IMR-90 (cell line): ENCODE measurements at regions of chr12 and their contacts with region 1.

Region 1: DNA sequence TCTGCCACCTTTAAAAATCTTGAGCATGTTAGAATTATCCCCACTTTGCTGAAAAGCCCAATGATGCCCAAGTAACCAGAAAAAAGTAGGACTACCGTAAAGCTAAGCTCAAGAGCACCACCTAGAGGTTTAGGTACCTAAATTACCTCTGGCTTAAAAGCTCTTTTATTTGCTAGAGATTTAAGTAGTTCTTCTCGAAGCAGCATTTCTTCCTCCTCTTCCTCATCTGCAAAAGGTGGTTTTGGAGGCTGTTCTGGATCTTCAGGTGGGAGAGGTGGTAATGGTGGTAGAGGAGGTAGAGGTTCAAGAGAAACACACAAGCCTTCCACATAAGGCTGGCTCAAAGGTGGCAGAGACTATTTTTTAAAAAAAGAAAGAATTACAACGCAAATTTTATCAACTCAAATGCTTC is 26.9 kb downstream of the ZFC3H1 start:
- DNase-seq: peak; percentile 72
- ATAC-seq: peak; percentile 54; the same call in 1 of the 2 replicates
- H3K4me3 ChIP-seq: no peak overlapping the region
- H3K27ac ChIP-seq: no peak overlapping the region
- H3K4me1 ChIP-seq: no peaks in the 10 kb centered on the region
- H3K27me3 ChIP-seq: no peaks in the 10 kb centered on the region
- CTCF ChIP-seq: peak; percentile 57
- POLR2A ChIP-seq: no peak
- RAD21 ChIP-seq: peak; percentile 38

Region 2: GRCh38 chr12:71648537-71648936 is 11.8 kb after region 1 on chr12:
- CTCF ChIA-PET with region 1: interaction called, 7 read pairs
- POLR2A ChIA-PET with region 1: no interaction called
- dilution Hi-C with region 1: no loop called
- in situ Hi-C with region 1: no loop called
- intact Hi-C with region 1: loop called (anchors 2 kb)
- DNase-seq: no peak
- ATAC-seq: no peak
- H3K4me3 ChIP-seq: no peak overlapping the region
- H3K27ac ChIP-seq: no peak overlapping the region
- H3K4me1 ChIP-seq: 0 out of 2 replicates have a peak, but pooled peaks cover 2% of the 10 kb centered on the region
- H3K27me3 ChIP-seq: no peaks in the 10 kb centered on the region
- CTCF ChIP-seq: no peak
- POLR2A ChIP-seq: no peak
- RAD21 ChIP-seq: no peak